Mammary epithelial cell (primary cell): ENCODE measurements at regions of chr7 and their contacts with region 1.

Region 1: DNA sequence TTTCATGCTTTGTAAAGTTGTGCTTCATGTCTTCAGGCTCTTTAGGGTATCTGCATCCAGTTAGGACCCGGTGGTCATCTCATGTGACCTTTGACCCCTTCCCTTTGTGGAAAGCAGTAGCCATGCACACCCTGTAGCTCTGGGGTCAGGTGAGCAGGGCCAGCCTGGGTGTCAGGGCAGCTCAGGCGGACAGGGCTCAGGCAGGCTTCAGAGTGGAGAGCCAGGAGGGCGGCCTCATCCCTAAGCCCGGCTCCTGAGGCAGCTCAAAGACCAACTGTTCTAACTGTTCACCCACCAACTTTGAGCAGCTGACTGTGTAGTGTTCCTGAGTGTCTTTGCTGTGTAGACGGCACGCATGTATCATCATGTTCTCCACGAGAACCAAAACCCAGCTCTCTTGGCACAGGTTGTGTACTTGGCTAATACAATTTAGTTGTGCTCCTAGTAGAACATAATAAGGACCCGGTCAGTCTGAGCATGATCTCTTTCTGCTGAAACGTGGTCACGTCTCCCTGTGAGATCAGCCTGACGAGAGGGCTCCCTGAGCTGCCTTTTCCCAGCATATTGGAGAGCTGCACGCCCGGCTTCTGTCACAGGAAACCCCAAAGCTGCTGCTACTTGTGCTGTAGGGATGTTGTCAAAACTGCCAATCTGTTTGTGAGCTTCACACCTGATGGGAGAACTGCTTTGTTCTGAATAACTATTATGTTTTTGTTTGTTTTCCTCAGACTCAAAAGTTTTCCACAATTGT is 30.0 kb downstream of the EEPD1 start:
- DNase-seq: no peak
- H3K4me3 ChIP-seq: no peak overlapping the region
- H3K27ac ChIP-seq: no peak overlapping the region
- H3K4me1 ChIP-seq: no peaks in the 10 kb centered on the region
- H3K27me3 ChIP-seq: no peaks in the 10 kb centered on the region
- CTCF ChIP-seq: no peak

Region 2: DNA sequence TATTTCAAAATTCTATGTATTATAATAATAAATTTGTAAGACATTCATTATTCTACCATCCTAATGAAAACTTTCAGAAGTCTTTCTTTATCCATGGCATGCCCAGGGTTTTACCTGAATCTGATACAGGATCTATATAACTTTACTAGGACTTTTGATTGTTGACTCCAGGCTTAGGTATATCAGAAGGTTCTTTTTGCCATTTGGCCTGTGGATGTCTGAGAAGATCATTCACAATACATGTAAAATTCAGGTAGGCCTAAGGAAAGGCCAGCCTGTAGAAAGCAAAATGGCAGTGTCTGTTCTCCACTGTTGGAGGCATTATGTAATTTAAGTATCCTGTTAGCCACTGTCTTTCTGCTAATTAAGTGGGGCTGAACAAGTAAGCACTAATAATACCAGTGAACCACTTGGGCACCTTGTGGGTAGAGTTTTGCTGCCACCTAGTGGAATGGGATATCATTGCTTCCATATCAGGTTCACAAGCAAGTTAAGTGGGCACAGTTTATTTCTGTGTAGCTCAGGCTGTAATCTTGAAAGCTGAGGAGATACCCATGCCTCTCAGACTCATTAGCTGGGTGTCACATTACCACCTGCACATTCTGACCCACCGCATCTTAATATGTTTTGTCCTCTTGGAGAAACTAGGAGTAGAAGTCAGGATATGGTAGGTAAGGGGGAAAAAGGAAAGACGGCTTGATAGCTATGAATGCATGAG is 276.7 kb before region 1 on chr7:
- CTCF ChIA-PET with region 1: no interaction called
- dilution Hi-C with region 1: no loop called
- in situ Hi-C with region 1: no loop called
- intact Hi-C with region 1: no loop called
- DNase-seq: peak; percentile 54
- H3K4me3 ChIP-seq: no peak overlapping the region
- H3K27ac ChIP-seq: no peak overlapping the region
- H3K4me1 ChIP-seq: peaks cover 10% of the 10 kb centered on the region
- H3K27me3 ChIP-seq: no peaks in the 10 kb centered on the region
- CTCF ChIP-seq: peak; percentile 88 to 90

Region 3: DNA sequence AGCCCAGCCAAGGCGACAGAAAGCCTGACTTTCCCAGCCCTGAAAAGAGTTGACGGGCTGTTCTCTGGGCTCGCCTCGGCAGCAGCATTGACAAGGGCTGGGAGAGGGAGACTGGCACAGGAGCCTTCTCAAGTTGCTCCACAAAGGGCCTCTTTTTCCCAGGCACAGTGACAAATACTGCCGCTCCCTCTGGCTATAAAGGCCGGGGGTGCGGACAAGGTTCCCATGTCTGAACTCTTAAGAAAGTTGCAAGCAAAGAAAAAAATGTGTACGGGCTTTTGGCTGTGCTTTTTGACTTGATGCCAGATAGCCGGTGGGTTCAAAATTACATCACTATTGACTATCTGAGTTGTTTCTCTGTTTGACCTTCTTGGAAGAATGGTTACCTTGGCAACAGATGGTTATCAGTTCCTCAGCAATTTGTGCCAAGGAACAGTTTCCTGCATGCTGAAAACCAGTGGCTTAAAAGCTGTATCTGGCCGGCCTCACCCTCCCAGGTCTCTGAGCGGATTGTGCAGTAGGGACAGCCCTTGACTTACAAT is 145.8 kb before region 1 on chr7:
- CTCF ChIA-PET with region 1: no interaction called
- dilution Hi-C with region 1: no loop called
- in situ Hi-C with region 1: no loop called
- intact Hi-C with region 1: no loop called
- DNase-seq: peak; percentile 94
- H3K4me3 ChIP-seq: no peak overlapping the region
- H3K27ac ChIP-seq: peak overlapping the region; percentile 44
- H3K4me1 ChIP-seq: peaks cover 25% of the 10 kb centered on the region
- H3K27me3 ChIP-seq: no peaks in the 10 kb centered on the region
- CTCF ChIP-seq: no peak

Region 4: DNA sequence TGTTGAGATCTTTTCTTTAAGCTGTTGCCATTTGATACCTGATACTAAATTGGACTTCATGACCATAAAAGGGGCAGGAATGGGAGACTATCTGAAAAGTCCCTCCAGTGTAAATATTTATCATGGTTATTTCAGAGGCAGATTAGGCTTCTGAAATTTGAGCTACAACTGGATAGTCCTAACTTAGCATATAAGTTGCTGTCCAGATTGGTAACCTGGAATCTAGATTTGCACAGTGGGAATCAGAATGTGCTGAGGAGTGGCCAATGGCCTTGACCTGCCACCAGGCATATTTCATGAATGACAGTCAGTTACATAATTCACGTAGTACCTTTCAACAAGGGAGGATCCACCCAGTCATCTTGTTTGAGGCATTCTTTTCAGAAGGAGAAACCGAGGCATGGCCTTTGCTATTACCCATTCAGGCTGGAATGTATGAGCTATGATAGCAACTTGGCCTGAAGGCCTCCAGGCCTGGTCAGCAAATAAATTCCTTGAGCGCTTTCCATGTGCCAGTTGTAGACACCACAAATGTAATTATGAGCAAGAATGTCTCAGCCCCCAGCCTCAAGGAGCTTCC is 50.0 kb after region 1 on chr7:
- CTCF ChIA-PET with region 1: no interaction called
- dilution Hi-C with region 1: no loop called
- in situ Hi-C with region 1: no loop called
- intact Hi-C with region 1: no loop called
- DNase-seq: no peak
- H3K4me3 ChIP-seq: no peak overlapping the region
- H3K27ac ChIP-seq: no peak overlapping the region
- H3K4me1 ChIP-seq: no peaks in the 10 kb centered on the region
- H3K27me3 ChIP-seq: no peaks in the 10 kb centered on the region
- CTCF ChIP-seq: no peak

Region 5: DNA sequence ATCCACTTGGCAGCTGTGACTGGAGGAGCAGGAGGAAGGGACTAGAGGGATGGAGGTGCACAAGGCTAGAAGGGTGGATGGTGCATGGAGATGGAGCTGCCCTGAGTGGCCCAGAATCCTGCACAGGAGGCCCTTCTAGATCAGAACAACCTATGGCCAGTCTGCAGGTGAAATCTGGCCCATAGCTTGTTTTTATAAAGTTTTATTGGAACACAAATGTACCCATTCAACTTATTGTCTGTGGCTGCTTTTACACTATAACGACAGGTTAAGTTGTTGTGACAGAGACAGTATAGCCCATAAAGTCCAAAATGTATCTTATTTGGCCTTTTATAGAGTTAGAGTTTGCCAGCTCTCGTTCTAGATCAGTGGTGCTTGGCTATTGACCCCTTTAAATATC is 67.3 kb after region 1 on chr7:
- CTCF ChIA-PET with region 1: no interaction called
- dilution Hi-C with region 1: loop called (anchors 10 kb)
- in situ Hi-C with region 1: no loop called
- intact Hi-C with region 1: no loop called
- DNase-seq: no peak
- H3K4me3 ChIP-seq: no peak overlapping the region
- H3K27ac ChIP-seq: no peak overlapping the region
- H3K4me1 ChIP-seq: no peaks in the 10 kb centered on the region
- H3K27me3 ChIP-seq: no peaks in the 10 kb centered on the region
- CTCF ChIP-seq: no peak